ENCODE measurements at regions of chr9 and their contacts with region 1.

Region 1: GRCh38 chr9:33211695-33212393 is 28.1 kb upstream of the SPINK4 start:
- DNase-seq: no peak
- ATAC-seq: peak; percentile 35; the same call in 1 of the 2 replicates
- H3K4me3 ChIP-seq: no peak overlapping the region
- H3K27ac ChIP-seq: no peak overlapping the region
- H3K4me1 ChIP-seq: no peaks in the 10 kb centered on the region
- H3K27me3 ChIP-seq: no peaks in the 10 kb centered on the region; the same call in 1 of the 2 replicates
- CTCF ChIP-seq: no peak

Region 2: GRCh38 chr9:33125871-33126822 is 85.7 kb before region 1 on chr9:
- CTCF ChIA-PET with region 1: no interaction called
- POLR2A ChIA-PET with region 1: interaction called, 21 read pairs
- in situ Hi-C with region 1: no loop called
- intact Hi-C with region 1: no loop called
- DNase-seq: no peak
- ATAC-seq: no peak
- H3K4me3 ChIP-seq: no peak overlapping the region
- H3K27ac ChIP-seq: no peak overlapping the region
- H3K4me1 ChIP-seq: no peaks in the 10 kb centered on the region
- H3K27me3 ChIP-seq: no peaks in the 10 kb centered on the region
- CTCF ChIP-seq: no peak